ENCODE measurements at regions of chr3 and their contacts with region 1.

Region 1: GRCh38 chr3:182980204-182981037 is at the start of gene DCUN1D1:
- DNase-seq: peak; percentile 75 to 93 (median 86)
- H3K4me3 ChIP-seq: peak within 1 kb of the TSS; percentile 65 to 97 (median 91)
- H3K27ac ChIP-seq: peak within 1 kb of the TSS; percentile 75 to 97 (median 92)
- H3K27me3 ChIP-seq: no peaks in the 10 kb centered on the region
- CTCF ChIP-seq: peak in 5 of 56 donors; percentile 3 to 23 (median 7)
- total RNA-seq, gene DCUN1D1: 49.4 to 86.8 (median 66.2) TPM

Region 2: DNA sequence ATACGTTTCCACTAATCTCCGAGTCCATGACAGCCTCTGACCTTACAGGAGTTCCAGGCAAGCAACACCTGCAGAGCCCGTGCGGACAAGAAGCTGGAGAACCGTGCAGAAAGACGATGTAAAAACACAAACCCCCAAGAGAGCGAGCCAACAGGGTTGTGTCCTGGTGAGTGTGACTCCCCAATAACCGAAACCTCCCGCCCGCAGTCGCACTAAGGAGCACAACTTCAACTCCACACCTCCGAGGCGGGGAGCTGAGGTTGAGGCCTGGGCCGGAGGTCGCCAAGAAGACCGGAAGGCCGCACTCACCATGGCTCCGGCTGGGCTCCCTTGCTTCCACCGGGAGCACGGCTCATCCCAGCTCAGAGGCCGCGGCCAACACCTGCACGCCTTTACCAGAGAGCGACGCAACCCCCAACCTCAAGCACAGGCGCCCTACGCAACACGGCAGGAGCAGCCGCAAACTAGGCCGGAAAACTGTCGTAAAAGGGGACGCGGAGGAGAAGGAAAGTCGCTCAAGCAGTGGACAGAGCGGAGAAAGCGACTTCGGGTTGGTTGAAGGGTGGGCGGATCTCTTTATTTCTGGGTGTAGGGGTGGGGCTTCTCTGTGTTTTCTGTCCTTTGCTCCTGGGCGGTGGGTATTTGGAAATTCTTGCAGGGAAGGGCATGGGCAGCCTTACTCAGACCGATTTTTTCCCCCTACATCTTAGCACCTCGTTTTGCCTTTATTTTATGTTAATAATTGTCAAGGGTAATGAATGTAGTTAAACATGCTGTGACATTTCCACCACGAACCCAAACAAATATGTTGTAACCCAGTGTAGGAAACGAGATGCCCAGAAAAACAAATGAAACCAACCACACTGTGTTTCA is 1990.9 kb before region 1 on chr3 and contains the start of gene DNAJC19:
- intact Hi-C with region 1: loop called in 1 of 2 experiments (anchors 5 kb)
- DNase-seq: peak; percentile 78 to 96 (median 94)
- H3K4me3 ChIP-seq: peak within 1 kb of the TSS; percentile 49 to 98 (median 88)
- H3K27ac ChIP-seq: peak within 1 kb of the TSS; percentile 13 to 95 (median 86)
- H3K27me3 ChIP-seq: no peaks in the 10 kb centered on the region
- CTCF ChIP-seq: peak in 27 of 56 donors; percentile 6 to 57 (median 17)
- total RNA-seq, gene DNAJC19: 26.3 to 63.9 (median 46.2) TPM

Region 3: DNA sequence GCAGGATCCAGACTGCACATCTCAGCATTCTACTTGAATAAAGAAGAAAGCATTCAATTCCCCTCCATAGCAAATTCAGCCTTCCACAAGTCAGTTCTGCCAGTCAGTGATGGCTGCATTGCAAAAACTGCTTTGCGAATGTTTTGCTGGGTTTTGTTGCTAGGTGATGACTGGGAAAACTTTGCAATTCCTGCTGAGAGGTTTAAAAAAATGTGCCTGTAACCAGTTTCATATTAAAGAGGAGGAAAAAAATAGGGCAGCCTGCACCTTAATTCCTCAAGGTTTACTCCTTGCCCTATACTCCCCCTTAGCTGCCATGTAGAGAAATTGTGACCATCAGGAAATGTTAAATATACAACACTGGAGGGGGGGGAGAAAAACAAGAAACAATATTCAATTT is 412.7 kb before region 1 on chr3:
- intact Hi-C with region 1: no loop called
- DNase-seq: no peak
- H3K4me3 ChIP-seq: no peak overlapping the region
- H3K27ac ChIP-seq: peak overlapping the region in 24 of 59 donors; percentile 6 to 75 (median 46)
- H3K27me3 ChIP-seq: peaks cover 0 to 6% (median 0%) of the 10 kb centered on the region in 45 donors
- CTCF ChIP-seq: peak in 21 of 56 donors; percentile 6 to 47 (median 22)

Region 4: DNA sequence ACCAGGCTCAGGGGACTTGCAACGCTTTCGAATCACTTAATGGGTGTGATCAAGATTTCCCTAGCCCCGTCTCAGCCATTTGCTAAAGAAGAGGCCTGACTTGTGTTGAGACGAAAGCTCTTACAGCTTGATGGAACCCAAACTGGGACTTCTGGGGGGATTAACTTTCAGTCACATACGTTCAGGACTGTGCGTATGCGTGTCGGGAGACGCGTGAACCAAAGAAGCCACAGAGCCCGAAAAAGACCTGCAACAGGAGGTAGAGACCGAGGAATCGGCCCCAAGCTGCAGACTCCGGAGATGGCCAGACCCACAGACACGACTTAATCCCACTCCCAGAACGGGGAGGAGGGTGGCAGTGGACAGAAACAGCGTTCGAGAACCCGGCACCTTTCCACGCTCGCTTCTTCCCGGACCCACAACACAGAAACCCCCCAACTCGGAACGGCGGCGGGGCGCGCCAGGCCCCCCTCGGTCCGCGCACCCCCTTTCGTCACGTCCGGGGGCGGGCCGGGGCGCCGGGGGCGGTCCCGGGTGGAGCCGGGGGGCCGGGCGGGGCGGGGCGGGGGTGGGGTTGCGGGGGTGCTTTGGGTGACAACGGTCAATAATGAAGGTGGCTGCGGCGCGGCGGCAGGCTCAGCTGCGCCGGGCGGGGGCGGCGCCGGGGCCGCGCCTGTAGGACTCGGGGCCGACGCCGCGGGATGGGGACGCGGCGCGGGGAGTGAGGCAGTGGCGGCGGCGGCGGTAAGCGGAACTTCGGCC is 187.3 kb before region 1 on chr3 and contains the start of gene ATP11B:
- intact Hi-C with region 1: loop called (anchors 2 to 5 kb)
- DNase-seq: peak; percentile 48 to 84 (median 70)
- H3K4me3 ChIP-seq: peak within 1 kb of the TSS; percentile 68 to 98 (median 86)
- H3K27ac ChIP-seq: peak within 1 kb of the TSS; percentile 67 to 99 (median 91)
- H3K27me3 ChIP-seq: no peaks in the 10 kb centered on the region
- CTCF ChIP-seq: peak in 7 of 56 donors; percentile 4 to 31 (median 20)
- total RNA-seq, gene ATP11B: 29.5 to 78.3 (median 50.7) TPM

Region 5: DNA sequence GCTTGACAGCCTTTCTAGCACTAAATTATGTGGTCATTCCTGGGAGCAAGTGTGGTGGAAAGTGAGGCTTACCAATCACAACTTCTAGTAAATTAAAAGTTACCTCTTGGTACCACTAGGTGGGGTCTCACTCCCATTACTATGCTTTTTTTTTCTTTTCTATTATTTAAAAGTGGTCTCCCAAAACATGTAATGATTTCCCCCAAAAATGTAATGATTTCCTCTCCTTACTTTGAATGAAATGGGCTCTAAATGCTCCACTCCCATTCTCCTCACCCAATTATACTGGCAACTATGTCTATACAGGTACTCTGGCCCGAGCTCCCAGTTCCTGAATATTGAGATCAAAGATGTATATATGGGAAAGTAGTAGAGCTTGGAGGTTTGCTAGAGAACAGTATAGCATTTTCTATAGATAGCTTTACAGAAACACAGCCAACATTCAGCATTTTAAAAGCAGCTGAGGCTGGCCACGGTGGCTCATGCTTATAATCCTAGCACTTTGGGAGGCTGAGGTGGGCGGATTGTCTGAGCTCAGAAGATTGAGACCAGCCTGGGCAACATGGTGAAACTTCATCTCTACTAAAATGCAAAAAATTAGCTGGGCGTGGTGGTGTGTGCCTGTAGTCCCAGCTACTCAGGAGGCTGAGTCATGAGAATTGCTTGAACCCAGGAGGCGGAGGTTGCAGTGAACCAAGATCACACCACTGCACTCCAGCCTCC is 70.9 kb before region 1 on chr3:
- intact Hi-C with region 1: loop called (anchors 5 to 10 kb)
- DNase-seq: peak in 2 of 10 donors; percentile 32 to 47
- H3K4me3 ChIP-seq: no peak overlapping the region
- H3K27ac ChIP-seq: peak overlapping the region in 15 of 59 donors; percentile 4 to 49 (median 28)
- H3K27me3 ChIP-seq: no peaks in the 10 kb centered on the region
- CTCF ChIP-seq: peak in 55 of 56 donors; percentile 26 to 71 (median 56)

Measured in dorsolateral prefrontal cortex (tissue), 120 donors.